PC-3 (cell line): ENCODE measurements at regions of chr14 and their contacts with region 1.

Region 1: DNA sequence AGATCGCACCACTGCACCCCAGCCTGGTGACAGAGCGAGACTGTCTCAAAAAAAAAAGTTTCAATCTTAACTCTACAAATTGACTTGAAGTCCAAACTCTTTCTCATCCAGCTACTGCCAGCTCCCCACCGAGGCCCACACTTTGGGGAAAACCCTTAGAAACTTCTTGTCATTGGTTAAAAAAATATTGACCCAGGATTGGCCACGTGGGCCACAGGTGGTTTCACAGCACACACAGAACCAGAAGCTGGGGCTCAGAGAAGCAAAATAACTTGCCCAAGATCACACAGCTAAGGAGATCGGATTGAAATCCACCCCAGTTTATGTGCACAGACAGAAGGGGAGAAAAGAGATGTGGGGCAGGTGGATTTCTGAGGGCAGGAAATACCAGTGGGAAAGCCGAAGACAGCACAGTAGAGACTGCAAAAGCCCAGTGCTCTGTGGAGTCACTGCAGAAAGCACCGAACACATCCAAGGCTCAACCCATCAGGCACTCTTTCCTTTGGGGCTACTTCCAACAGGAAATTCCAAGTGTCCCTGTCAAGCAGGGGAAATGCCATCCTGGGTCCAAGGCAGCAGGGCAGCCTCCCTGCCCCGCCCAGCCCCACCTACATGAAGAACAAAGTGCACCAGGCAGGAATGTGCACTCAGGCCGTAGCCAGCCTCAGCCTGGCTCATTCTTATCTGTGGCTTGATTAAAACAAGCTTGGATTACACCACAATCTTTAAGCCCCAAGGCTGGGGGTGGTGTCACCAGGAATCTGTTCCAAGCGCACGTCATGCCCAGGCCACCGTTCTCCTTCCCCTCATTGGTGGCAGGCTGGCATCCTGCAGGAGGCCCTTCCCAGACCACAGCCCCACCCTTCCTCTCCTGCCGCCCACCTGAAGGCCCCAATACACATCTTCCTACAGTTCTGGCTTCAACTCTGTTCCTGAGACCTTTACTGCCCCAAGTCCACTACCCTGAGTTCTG is 72.5 kb downstream of the ITPK1 start:
- DNase-seq: peak; percentile 98
- ATAC-seq: peak; percentile 92
- H3K4me3 ChIP-seq: peak overlapping the region; percentile 50; the same call in 1 of the 2 replicates
- H3K27ac ChIP-seq: peak overlapping the region; percentile 100
- H3K4me1 ChIP-seq: peaks cover 72% of the 10 kb centered on the region
- H3K27me3 ChIP-seq: no peaks in the 10 kb centered on the region
- CTCF ChIP-seq: no peak

Region 2: GRCh38 chr14:92960711-92961549 is 82.3 kb before region 1 on chr14:
- CTCF ChIA-PET with region 1: no interaction called
- POLR2A ChIA-PET with region 1: no interaction called
- intact Hi-C with region 1: loop called (anchors 5 kb)
- DNase-seq: peak; percentile 72
- ATAC-seq: peak; percentile 88
- H3K4me3 ChIP-seq: no peak overlapping the region
- H3K27ac ChIP-seq: no peak overlapping the region
- H3K4me1 ChIP-seq: peaks cover 22% of the 10 kb centered on the region
- H3K27me3 ChIP-seq: no peaks in the 10 kb centered on the region
- CTCF ChIP-seq: no peak

Region 3: DNA sequence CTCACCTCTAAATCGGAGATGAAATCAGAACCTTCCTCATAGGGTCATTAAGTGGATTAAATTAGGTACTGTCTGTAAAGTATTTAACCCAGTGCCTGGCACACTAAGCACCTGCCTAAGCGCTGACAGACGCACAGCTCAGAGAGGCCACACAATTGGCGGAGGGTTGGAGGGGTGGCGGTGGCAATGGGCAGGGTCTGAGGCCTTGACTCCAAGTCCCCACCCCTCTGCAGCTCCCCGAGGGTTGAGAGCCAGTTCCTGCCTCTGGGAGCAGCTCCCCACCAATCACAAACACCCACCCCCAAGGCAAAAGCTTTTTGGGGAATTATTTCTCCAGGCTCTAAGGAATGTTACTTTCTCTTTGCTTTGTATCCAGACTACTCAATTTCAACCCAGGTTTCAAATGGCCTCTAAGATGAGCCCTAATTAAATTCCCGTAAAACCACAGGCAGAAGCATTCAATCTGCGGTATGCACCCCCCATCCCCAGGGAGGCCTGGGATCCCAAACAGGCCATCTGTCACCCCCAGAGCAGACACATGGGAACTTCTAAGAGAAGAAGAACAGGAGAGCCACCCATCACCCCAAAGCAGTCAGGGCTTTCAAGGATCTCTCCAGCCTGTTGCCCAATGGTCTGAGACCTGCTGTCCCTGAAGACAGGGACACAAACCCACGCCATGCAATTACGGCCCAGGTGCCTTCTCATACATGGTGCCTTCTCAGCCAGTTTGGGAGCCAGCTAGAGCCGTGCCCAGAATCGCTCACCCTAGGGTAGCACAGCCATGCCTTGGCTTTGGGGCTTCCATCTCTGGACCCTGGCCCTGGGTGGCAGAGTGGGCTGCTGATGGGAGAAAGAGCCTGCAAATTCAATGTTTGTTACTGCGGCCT is 54.2 kb before region 1 on chr14:
- CTCF ChIA-PET with region 1: no interaction called
- POLR2A ChIA-PET with region 1: no interaction called
- intact Hi-C with region 1: no loop called
- DNase-seq: no peak
- ATAC-seq: no peak
- H3K4me3 ChIP-seq: no peak overlapping the region
- H3K27ac ChIP-seq: no peak overlapping the region
- H3K4me1 ChIP-seq: peaks cover 20% of the 10 kb centered on the region
- H3K27me3 ChIP-seq: no peaks in the 10 kb centered on the region
- CTCF ChIP-seq: no peak

Region 4: GRCh38 chr14:93676419-93676958 is 633.2 kb after region 1 on chr14:
- CTCF ChIA-PET with region 1: no interaction called
- POLR2A ChIA-PET with region 1: no interaction called
- intact Hi-C with region 1: no loop called
- DNase-seq: no peak
- ATAC-seq: no peak
- H3K4me3 ChIP-seq: no peak overlapping the region
- H3K27ac ChIP-seq: no peak overlapping the region
- H3K4me1 ChIP-seq: no peaks in the 10 kb centered on the region
- H3K27me3 ChIP-seq: peaks cover 35% of the 10 kb centered on the region
- CTCF ChIP-seq: no peak